Activated naive CD4-positive, alpha-beta T cell treated with anti-CD3 and anti-CD28 coated beads for 36 hours (primary cell): ENCODE measurements at regions of chr13 and their contacts with region 1.

Region 1: GRCh38 chr13:40190641-40191100 is 475.8 kb downstream of the FOXO1 start:
- DNase-seq: peak; percentile 91
- H3K4me3 Mint-ChIP-seq: peak overlapping the region; percentile 36
- H3K27ac Mint-ChIP-seq: peak overlapping the region; percentile 81
- H3K4me1 Mint-ChIP-seq: peaks cover 69% of the 10 kb centered on the region
- H3K27me3 Mint-ChIP-seq: no peaks in the 10 kb centered on the region

Region 2: GRCh38 chr13:39913928-39914327 is 276.7 kb before region 1 on chr13:
- CTCF ChIA-PET with region 1: no interaction called
- intact Hi-C with region 1: no loop called
- DNase-seq: no peak
- H3K4me3 Mint-ChIP-seq: no peak overlapping the region
- H3K27ac Mint-ChIP-seq: no peak overlapping the region
- H3K4me1 Mint-ChIP-seq: peaks cover 9% of the 10 kb centered on the region
- H3K27me3 Mint-ChIP-seq: peaks cover 9% of the 10 kb centered on the region

Region 3: DNA sequence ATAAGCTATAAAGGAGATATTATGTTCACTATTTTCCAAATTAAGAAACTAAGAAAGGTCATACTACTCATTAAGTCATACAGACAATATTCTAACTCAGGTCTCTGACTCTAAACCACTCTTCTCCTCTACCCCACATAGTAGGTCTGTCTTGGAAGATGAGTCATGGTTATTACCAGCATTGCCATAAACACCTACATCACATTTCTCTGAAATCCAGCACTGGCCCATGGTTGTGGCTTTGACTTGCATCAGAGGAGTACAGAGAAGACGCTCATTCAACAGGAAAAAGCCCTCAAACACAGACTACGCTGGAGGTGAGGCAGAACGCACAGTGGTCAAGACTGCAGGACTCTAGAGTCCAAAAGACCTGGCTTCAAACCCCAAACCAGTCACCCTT is 58.4 kb before region 1 on chr13:
- CTCF ChIA-PET with region 1: no interaction called
- intact Hi-C with region 1: loop called (anchors 1 kb)
- DNase-seq: peak; percentile 87
- H3K4me3 Mint-ChIP-seq: no peak overlapping the region
- H3K27ac Mint-ChIP-seq: peak overlapping the region; percentile 66
- H3K4me1 Mint-ChIP-seq: peaks cover 25% of the 10 kb centered on the region
- H3K27me3 Mint-ChIP-seq: no peaks in the 10 kb centered on the region

Region 4: GRCh38 chr13:40170982-40171381 is 19.7 kb before region 1 on chr13:
- CTCF ChIA-PET with region 1: interaction called, 6 read pairs
- intact Hi-C with region 1: loop called (anchors 1 kb)
- DNase-seq: peak; percentile 82
- H3K4me3 Mint-ChIP-seq: no peak overlapping the region
- H3K27ac Mint-ChIP-seq: peak overlapping the region; percentile 9
- H3K4me1 Mint-ChIP-seq: peaks cover 41% of the 10 kb centered on the region
- H3K27me3 Mint-ChIP-seq: no peaks in the 10 kb centered on the region

Region 5: GRCh38 chr13:40206241-40207000 is 15.8 kb after region 1 on chr13:
- CTCF ChIA-PET with region 1: interaction called, 9 read pairs
- intact Hi-C with region 1: loop called (anchors 1 kb)
- DNase-seq: peak; percentile 74
- H3K4me3 Mint-ChIP-seq: peak overlapping the region; percentile 64
- H3K27ac Mint-ChIP-seq: peak overlapping the region; percentile 100
- H3K4me1 Mint-ChIP-seq: peaks cover 73% of the 10 kb centered on the region
- H3K27me3 Mint-ChIP-seq: no peaks in the 10 kb centered on the region

Region 6: DNA sequence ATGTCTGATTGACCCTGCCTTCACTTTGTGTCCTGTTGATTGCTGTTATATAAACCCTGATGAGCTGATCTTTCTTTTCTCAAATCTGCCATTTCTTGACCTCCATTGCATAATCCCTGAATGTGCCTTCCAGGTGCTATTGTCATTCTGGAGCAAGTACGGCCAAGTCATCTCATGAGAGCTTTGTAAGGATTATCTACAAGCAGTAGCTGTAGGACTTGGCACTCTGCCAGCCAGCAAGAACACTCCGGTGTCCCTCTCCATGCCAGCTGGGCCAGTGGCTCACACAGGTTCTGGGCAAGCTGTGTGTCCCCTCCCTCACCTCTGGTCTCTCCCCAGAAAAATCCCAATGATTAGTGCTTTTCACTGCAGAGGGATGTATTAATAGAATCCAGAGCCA is 127.7 kb after region 1 on chr13:
- CTCF ChIA-PET with region 1: no interaction called
- intact Hi-C with region 1: loop called (anchors 1 kb)
- DNase-seq: peak; percentile 23
- H3K4me3 Mint-ChIP-seq: no peak overlapping the region
- H3K27ac Mint-ChIP-seq: no peak overlapping the region
- H3K4me1 Mint-ChIP-seq: peaks cover 64% of the 10 kb centered on the region
- H3K27me3 Mint-ChIP-seq: no peaks in the 10 kb centered on the region